ENCODE measurements at regions of chr5 and their contacts with region 1.

Region 1: GRCh38 chr5:149544028-149544420 is 7.2 kb downstream of the CSNK1A1 start:
- DNase-seq: no peak
- H3K4me3 ChIP-seq: no peak overlapping the region
- H3K27ac ChIP-seq: no peak overlapping the region
- H3K4me1 ChIP-seq: peaks cover 0 to 10% (median 3%) of the 10 kb centered on the region in 4 experiments; a peak in 4 of 7 replicates
- H3K27me3 ChIP-seq: no peaks in the 10 kb centered on the region
- CTCF ChIP-seq: no peak
- EP300 ChIP-seq: no peak
- POLR2A ChIP-seq: peak in 1 of 2 experiments; percentile 15; a peak in 1 of 3 replicates
- RAD21 ChIP-seq: no peak

Region 2: GRCh38 chr5:149526845-149527580 is 17.0 kb before region 1 on chr5:
- CTCF ChIA-PET with region 1: no interaction called
- POLR2A ChIA-PET with region 1: interaction called, 14 read pairs
- DNase-seq: no peak
- H3K4me3 ChIP-seq: no peak overlapping the region
- H3K27ac ChIP-seq: no peak overlapping the region
- H3K4me1 ChIP-seq: peaks cover 0 to 11% (median 2%) of the 10 kb centered on the region in 4 experiments; a peak in 3 of 7 replicates
- H3K27me3 ChIP-seq: no peaks in the 10 kb centered on the region
- CTCF ChIP-seq: no peak
- EP300 ChIP-seq: no peak
- POLR2A ChIP-seq: no peak
- RAD21 ChIP-seq: no peak

Region 3: DNA sequence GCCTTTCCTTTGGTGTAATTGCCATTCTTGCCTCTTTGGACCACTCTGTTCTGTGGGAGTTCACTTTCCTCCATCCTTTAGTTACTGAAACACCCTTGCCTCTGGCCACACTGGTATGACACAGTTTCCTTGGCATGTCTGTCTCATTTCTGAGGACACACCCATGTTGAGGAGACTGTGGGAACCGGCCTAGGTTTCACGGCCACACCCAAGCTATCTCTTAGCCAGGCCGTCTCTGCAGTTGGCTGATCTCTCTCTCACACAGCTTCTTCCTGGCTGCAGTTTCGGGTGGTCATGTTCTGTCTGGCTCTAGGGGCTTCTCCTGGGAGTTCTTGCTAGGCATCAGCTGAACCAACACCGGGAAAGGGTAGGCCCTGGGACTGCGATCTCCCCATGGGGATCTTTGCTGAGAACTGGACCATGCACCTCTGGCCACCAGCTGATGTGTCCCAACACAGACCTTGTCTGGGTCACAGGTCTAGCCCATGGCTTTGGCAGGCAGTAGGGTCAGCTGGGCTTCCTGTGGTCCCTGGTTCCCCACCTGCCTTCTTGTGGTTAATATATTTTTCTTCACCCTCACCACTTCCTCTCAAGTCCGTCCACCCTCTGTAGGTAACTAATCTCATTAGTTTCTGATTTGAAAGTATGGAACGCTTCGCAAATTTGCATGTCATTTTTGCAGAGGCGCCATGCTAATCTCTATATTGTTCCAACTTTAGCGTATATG is 62.1 kb after region 1 on chr5:
- CTCF ChIA-PET with region 1: no interaction called
- POLR2A ChIA-PET with region 1: no interaction called
- DNase-seq: no peak
- H3K4me3 ChIP-seq: no peak overlapping the region
- H3K27ac ChIP-seq: no peak overlapping the region
- H3K4me1 ChIP-seq: no peaks in the 10 kb centered on the region
- H3K27me3 ChIP-seq: no peaks in the 10 kb centered on the region
- CTCF ChIP-seq: no peak
- EP300 ChIP-seq: no peak
- POLR2A ChIP-seq: no peak
- RAD21 ChIP-seq: no peak

Region 4: DNA sequence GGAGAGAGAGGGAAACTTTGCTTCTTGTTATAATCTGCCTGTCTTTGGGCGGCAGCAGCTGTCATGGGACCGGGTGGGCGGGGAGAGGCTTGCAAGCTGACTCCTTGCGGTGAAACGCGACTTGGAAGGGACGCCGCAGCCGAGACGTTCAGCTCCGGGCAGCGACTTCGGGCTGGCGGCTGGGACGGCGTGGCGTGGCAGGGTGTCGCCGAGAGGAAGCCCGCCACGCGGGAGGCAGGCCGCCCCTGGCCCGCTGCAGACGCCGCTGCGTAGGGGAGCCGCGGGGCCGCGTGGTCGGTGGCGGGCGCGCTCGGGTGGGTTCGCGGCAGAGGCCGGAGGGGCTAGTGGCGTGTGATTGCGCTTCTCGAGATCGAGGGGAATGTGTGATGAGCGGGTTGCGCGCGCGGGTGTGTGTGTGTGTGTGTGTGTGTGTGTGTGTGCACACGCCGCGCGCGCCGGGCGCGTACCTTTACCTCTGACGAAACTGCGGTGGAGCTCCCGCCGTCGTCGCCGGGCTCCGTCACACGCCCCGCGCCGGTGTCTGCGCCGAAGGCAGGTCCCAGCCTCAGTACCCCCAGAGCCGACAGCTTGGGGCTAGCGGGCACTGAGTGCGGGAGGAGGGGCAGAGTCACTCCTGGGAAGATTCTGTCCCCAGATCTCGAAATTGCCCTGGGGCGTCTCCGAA is 187.8 kb after region 1 on chr5:
- CTCF ChIA-PET with region 1: no interaction called
- POLR2A ChIA-PET with region 1: no interaction called
- DNase-seq: peak; percentile 53 to 68
- H3K4me3 ChIP-seq: peak overlapping the region; percentile 60 to 93 (median 64)
- H3K27ac ChIP-seq: no peak overlapping the region
- H3K4me1 ChIP-seq: peaks cover 2 to 11% (median 4%) of the 10 kb centered on the region in 4 experiments; a peak in 5 of 7 replicates
- H3K27me3 ChIP-seq: peaks cover 0 to 21% (median 12%) of the 10 kb centered on the region in 4 experiments; a peak in 5 of 7 replicates
- CTCF ChIP-seq: no peak
- EP300 ChIP-seq: no peak
- POLR2A ChIP-seq: no peak
- RAD21 ChIP-seq: no peak

Measured in H1 (cell line).